Ascending aorta (tissue), 2 donors: ENCODE measurements at regions of chr20 and their contacts with region 1.

Region 1: DNA sequence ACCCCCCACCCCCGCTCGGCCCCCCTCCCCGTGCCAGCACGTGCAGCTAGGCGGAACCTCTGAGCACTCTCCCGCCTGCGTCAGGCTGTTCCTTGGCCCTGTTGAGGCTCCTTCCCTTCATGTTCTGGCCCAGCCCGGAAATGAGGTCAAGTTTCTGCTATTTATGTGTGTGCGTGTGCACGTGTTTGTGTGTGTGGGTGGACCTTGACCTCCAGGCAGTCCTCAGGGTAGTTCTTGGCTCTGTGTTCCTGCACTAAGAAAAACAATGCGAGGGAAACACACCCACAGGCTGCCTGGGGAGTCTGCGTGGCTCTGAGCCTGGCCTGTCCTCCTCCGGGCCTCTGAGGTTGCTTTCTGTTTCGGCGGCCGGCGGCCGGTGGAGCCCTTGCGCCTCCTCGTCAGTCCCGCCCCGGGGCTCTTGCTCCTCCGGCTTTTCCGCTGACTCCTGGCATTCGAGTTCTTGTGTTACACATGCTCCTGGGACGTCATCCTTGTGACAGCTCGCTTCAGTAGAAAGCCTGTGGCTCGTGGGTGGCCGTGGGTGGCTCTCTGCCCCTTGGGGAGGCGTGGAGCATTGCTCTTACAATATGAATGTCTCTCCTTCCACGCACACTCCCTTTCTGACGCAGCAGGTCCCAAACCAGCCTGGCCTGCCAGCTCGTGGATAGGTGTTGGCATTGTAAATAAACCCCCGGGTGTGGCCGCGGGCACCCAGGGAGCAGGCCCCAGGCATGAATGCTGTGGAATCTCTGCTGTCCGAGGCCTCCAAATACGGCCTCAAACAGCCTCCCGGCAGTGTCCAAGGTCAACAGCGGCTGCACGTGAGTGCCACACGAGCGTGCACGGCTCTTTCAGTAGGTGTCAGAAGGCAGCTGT is 10.0 kb downstream of the SLCO4A1 start:
- DNase-seq: peak; percentile 88 to 96
- H3K4me3 ChIP-seq: peak overlapping the region; percentile 25 to 45
- H3K27ac ChIP-seq: peak overlapping the region; percentile 89 to 91
- H3K4me1 ChIP-seq: peaks cover 4 to 14% of the 10 kb centered on the region in 2 donors
- H3K27me3 ChIP-seq: no peaks in the 10 kb centered on the region
- CTCF ChIP-seq: no peak

Region 2: GRCh38 chr20:62623488-62624324 is 28.6 kb before region 1 on chr20:
- intact Hi-C with region 1: loop called (anchors 1 kb)
- DNase-seq: peak; percentile 91 to 96
- H3K4me3 ChIP-seq: peak overlapping the region; percentile 5 to 9
- H3K27ac ChIP-seq: peak overlapping the region; percentile 78 to 92
- H3K4me1 ChIP-seq: peaks cover 7 to 16% of the 10 kb centered on the region in 2 donors
- H3K27me3 ChIP-seq: no peaks in the 10 kb centered on the region
- CTCF ChIP-seq: no peak